ENCODE measurements at regions of chr3 and their contacts with region 1.

Region 1: GRCh38 chr3:27712136-27713077 is 9.7 kb downstream of the EOMES start:
- DNase-seq: peak; percentile 54 to 90 (median 72)
- ATAC-seq: peak; percentile 95
- H3K4me3 ChIP-seq: peak overlapping the region; percentile 68
- H3K4me3 Mint-ChIP-seq: peak overlapping the region; percentile 97
- H3K27ac ChIP-seq: no peak overlapping the region
- H3K27ac Mint-ChIP-seq: peak overlapping the region; percentile 3
- H3K4me1 ChIP-seq: peaks cover 27% of the 10 kb centered on the region
- H3K4me1 Mint-ChIP-seq: peaks cover 27% of the 10 kb centered on the region
- H3K27me3 ChIP-seq: peaks cover 26 to 31% of the 10 kb centered on the region in 2 experiments
- H3K27me3 Mint-ChIP-seq: peaks cover 82% of the 10 kb centered on the region
- CTCF ChIP-seq: peak; percentile 88

Region 2: GRCh38 chr3:27095553-27096222 is 616.7 kb before region 1 on chr3:
- CTCF ChIA-PET with region 1: no interaction called
- POLR2A ChIA-PET with region 1: no interaction called
- intact Hi-C with region 1: no loop called
- DNase-seq: no peak
- ATAC-seq: no peak
- H3K4me3 ChIP-seq: no peak overlapping the region
- H3K4me3 Mint-ChIP-seq: no peak overlapping the region
- H3K27ac ChIP-seq: no peak overlapping the region
- H3K27ac Mint-ChIP-seq: no peak overlapping the region
- H3K4me1 ChIP-seq: no peaks in the 10 kb centered on the region
- H3K4me1 Mint-ChIP-seq: no peaks in the 10 kb centered on the region
- H3K27me3 ChIP-seq: no peaks in the 10 kb centered on the region
- H3K27me3 Mint-ChIP-seq: no peaks in the 10 kb centered on the region
- CTCF ChIP-seq: no peak

Region 3: DNA sequence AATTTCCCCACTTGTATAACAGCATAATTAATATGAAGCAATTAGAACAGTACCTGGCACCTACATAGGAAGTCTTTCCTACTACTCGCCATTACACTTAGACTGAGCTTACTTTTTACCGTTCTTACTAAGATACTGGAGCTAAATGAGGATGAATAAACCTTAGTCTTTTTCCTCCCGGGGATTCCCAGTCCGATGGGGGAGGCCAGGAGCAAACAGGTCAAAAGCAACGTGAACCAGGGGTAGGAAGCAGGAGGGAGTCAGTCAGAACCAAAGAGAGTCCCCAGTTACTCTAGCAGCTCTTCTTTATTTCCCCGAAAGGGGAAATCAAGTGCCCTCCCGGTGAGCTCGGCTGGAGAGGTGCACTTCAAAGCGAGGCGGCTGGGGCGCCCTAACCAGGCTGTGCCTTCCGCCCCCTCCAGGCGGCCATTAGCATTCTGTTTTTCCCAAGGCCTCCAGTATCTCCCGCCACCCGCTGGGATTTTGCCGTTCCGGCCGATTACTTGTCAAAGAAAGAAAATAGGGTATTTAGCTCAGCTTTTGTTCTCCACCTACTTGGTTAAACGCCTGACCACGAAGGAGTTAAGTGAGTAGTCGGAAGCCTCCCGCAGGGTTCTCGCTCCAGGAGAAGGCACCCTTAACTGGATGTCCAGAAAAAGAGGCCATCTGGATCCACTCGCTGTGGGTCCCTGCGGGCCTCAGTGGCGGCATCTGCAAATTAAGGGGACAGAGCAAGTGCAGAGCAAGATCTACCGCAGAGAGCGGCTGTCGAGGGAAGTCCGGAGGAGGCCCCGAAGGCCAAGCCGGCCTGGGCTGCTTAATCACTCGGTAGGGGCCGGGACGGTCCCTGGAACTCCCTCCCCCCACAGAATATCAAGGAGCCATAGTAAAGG is 16.0 kb after region 1 on chr3:
- CTCF ChIA-PET with region 1: interaction called, 40 read pairs
- POLR2A ChIA-PET with region 1: interaction called, 4 read pairs
- intact Hi-C with region 1: loop called in 1 of 2 experiments (anchors 2 kb)
- DNase-seq: peak in 2 of 14 experiments; percentile 39 to 54
- ATAC-seq: peak; percentile 26
- H3K4me3 ChIP-seq: peak overlapping the region; percentile 17
- H3K4me3 Mint-ChIP-seq: peak overlapping the region; percentile 61
- H3K27ac ChIP-seq: no peak overlapping the region
- H3K27ac Mint-ChIP-seq: no peak overlapping the region
- H3K4me1 ChIP-seq: peaks cover 44% of the 10 kb centered on the region
- H3K4me1 Mint-ChIP-seq: peaks cover 62% of the 10 kb centered on the region
- H3K27me3 ChIP-seq: peaks cover 67 to 84% of the 10 kb centered on the region in 2 experiments
- H3K27me3 Mint-ChIP-seq: peaks cover 86% of the 10 kb centered on the region
- CTCF ChIP-seq: no peak

Region 4: DNA sequence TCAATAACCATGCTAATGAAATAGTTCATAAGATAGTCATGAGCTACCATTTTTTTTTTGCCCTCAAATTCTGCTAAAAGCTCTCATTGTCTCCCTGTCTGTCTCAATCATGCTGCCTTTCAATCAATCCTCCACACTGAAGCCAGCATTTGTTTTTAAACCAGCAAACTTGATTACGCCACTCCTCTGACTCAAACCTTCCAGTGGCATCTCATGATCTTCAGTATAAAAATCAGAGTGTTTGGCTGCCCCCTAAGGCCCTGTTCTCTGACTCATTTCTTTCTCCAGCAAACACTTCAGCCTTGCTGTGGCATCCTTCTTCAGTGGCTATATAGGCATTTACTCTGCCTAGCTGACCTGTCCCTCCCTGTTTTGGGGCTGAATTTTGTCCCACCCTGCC is 45.7 kb after region 1 on chr3:
- CTCF ChIA-PET with region 1: no interaction called
- POLR2A ChIA-PET with region 1: no interaction called
- intact Hi-C with region 1: no loop called
- DNase-seq: no peak
- ATAC-seq: no peak
- H3K4me3 ChIP-seq: no peak overlapping the region
- H3K4me3 Mint-ChIP-seq: no peak overlapping the region
- H3K27ac ChIP-seq: no peak overlapping the region
- H3K27ac Mint-ChIP-seq: no peak overlapping the region
- H3K4me1 ChIP-seq: no peaks in the 10 kb centered on the region
- H3K4me1 Mint-ChIP-seq: peaks cover under 1% of the 10 kb centered on the region
- H3K27me3 ChIP-seq: no peaks in the 10 kb centered on the region
- H3K27me3 Mint-ChIP-seq: no peaks in the 10 kb centered on the region
- CTCF ChIP-seq: no peak

Region 5: GRCh38 chr3:28241221-28242160 is 529.1 kb after region 1 on chr3 and contains the start of gene CMC1:
- CTCF ChIA-PET with region 1: no interaction called
- POLR2A ChIA-PET with region 1: no interaction called
- intact Hi-C with region 1: loop called in 1 of 2 experiments (anchors 5 kb)
- DNase-seq: peak; percentile 72 to 96 (median 88)
- ATAC-seq: peak; percentile 93
- H3K4me3 ChIP-seq: peak within 1 kb of the TSS; percentile 66
- H3K4me3 Mint-ChIP-seq: peak within 1 kb of the TSS; percentile 98
- H3K27ac ChIP-seq: peak within 1 kb of the TSS; percentile 27 to 69
- H3K27ac Mint-ChIP-seq: peak within 1 kb of the TSS; percentile 79
- H3K4me1 ChIP-seq: peaks cover 33% of the 10 kb centered on the region
- H3K4me1 Mint-ChIP-seq: peaks cover 49% of the 10 kb centered on the region
- H3K27me3 ChIP-seq: no peaks in the 10 kb centered on the region
- H3K27me3 Mint-ChIP-seq: no peaks in the 10 kb centered on the region
- CTCF ChIP-seq: no peak
- total RNA-seq, gene CMC1: 5.0 to 6.6 TPM

Region 6: DNA sequence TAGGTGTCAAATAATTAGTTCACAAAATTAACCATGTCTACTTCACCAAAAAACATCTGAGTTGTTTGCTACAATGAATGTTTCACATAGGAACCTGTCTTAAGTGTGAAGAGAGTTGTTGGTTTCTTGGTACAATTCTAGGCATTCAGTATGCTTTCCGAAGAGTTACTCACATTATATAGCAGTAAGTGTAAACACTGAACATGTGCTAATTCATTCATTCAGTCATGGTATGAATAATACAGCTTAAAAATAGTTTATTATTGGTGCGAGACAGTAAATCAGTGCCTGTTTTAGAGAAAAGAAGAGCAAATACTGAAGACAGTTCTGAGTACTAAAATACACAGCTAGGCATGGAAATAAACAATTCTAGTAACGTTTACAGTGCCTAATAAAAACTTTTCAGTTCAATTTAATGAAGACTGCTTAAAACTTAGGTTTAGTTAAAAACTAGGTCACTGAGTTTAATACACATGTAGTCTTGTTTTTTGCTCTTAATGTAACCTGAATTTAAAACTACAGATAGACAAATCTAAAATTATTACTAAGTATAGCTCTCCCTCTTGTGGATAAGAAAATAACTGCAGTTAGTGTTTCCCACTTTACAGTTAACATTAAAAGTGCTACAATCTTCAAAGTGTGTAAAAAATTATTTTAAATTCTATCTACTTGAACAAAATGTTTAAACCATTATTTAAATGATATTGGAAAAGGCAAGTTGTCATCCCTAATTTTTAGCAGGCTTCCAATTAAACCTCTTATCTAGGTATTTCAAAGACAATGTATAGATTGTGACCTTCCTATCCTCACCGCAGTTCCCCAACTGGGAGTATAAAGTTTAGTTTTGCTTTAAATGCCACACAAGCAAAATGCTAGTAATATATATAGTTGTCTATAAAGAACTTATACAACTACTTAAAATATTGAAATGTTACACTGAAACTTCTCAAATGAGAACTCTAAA is 616.1 kb after region 1 on chr3:
- CTCF ChIA-PET with region 1: interaction called, 56 read pairs
- POLR2A ChIA-PET with region 1: interaction called, 13 read pairs
- intact Hi-C with region 1: loop called (anchors 1 kb)
- DNase-seq: peak in 3 of 14 experiments; percentile 63 to 68 (median 68)
- ATAC-seq: peak; percentile 43
- H3K4me3 ChIP-seq: no peak overlapping the region
- H3K4me3 Mint-ChIP-seq: no peak overlapping the region
- H3K27ac ChIP-seq: no peak overlapping the region
- H3K27ac Mint-ChIP-seq: no peak overlapping the region
- H3K4me1 ChIP-seq: no peaks in the 10 kb centered on the region
- H3K4me1 Mint-ChIP-seq: peaks cover 20% of the 10 kb centered on the region
- H3K27me3 ChIP-seq: no peaks in the 10 kb centered on the region
- H3K27me3 Mint-ChIP-seq: no peaks in the 10 kb centered on the region
- CTCF ChIP-seq: peak; percentile 83

Region 7: DNA sequence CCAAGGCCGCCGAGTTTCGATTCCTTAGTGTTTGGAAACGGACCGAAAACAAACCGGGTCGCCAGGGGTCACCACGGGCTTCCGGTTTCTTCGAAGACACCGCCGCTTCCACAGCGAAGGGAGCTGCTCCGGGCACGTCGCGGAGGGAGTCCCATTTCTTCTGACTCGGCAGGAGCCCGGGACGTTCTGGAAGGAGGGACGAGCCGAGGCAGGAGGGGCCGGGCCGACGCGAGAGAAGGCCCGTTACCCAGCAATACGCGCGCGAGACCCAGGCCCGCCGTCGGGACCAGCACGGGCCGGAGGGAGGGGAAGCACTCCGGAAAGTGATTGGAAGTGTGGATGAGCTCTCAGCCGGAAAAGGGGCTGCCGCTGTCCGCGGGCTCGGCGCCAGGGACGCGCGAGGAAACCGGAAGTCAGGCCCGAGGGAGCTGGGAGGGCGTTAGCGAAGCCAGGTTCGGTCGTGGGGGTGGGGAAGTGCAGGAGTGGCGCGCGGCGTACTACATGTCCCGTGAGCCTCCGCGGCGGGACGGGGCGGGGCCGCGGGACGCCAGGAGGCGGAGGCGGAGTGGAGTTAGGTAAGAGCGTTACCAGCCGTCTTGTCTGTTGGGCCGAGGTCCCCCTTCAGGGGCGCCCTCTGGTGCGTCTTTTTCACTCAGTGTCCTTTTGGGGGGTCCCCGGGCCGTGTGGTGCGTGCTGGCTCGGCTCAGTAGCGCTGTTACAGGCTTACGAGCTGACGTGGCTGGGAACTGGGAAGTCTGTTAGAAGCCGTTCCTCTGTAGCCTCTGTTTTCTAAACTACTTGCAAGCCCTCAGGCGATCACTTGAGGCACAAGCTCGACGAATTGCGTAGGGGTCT is 636.4 kb after region 1 on chr3 and contains the starts of genes AZI2 and ZCWPW2:
- CTCF ChIA-PET with region 1: no interaction called
- POLR2A ChIA-PET with region 1: interaction called, 14 read pairs
- intact Hi-C with region 1: no loop called
- DNase-seq: peak; percentile 85 to 96 (median 90)
- ATAC-seq: peak; percentile 87
- H3K4me3 ChIP-seq: peak within 1 kb of the TSS; percentile 96
- H3K4me3 Mint-ChIP-seq: peak within 1 kb of the TSS; percentile 100
- H3K27ac ChIP-seq: peak within 1 kb of the TSS; percentile 91 to 99
- H3K27ac Mint-ChIP-seq: peak within 1 kb of the TSS; percentile 99
- H3K4me1 ChIP-seq: peaks cover 17% of the 10 kb centered on the region
- H3K4me1 Mint-ChIP-seq: peaks cover 55% of the 10 kb centered on the region
- H3K27me3 ChIP-seq: no peaks in the 10 kb centered on the region
- H3K27me3 Mint-ChIP-seq: no peaks in the 10 kb centered on the region
- CTCF ChIP-seq: peak; percentile 18
- total RNA-seq, gene AZI2: 27.4 to 31.5 TPM
- total RNA-seq, gene ZCWPW2: 0.27 to 0.28 TPM

Measured in CD4-positive, alpha-beta T cell (primary cell).